Activated T-helper 1 cell treated with anti-CD3 and anti-CD28 coated beads, Interleukin-12 subunit alpha, Interleukin-12 subunit beta, Interleukin-2, Interleukin-4 antibody, amounts not matched to agents 30 ng/mL and 10 ng/mL and 1 ng/mL, durations not matched to agents 14 hours and 24 hours and 36 hours (primary cell): ENCODE measurements at regions of chr7 and their contacts with region 1.

Region 1: DNA sequence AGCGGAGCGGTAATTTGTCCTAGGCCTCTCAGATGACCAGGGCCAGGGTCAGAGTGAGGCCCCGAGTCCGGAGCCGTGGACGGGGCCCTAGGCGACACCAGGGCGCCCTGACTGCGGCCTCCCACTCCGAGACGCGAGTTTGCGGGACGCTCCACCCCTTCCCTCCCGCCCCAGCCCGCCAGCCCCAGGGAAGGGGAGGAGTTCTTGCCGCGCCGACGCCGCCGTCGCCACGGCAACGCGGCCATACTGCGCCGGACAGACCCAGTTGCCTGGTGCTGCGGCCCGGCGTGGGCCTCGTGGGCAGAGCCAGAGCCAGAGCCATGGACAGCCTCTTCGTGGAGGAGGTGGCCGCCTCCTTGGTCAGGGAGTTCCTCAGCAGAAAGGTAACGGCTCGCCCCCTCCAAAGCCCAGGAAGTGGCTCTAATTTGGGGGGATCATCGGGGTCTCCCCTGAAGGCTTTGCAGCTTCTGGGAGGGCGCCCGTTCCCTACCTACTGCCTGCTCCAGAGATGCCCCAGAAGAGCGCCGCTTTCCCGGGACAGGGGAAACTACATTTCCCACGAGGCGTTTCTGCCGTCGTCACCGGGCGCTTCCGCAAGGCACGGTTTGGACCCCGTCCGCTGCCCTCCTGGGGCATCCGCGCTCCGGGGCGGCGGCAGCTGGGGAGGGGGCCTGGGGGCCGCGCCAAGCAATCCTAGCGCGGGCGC is at the start of gene MINDY4:
- DNase-seq: peak; percentile 57
- H3K4me3 Mint-ChIP-seq: peak within 1 kb of the TSS; percentile 83
- H3K27ac Mint-ChIP-seq: peak within 1 kb of the TSS; percentile 77
- H3K4me1 Mint-ChIP-seq: peaks cover 12% of the 10 kb centered on the region
- H3K27me3 Mint-ChIP-seq: peaks cover 7% of the 10 kb centered on the region
- total RNA-seq, gene MINDY4: 0.96 and 2.2 TPM in 2 replicates

Region 2: DNA sequence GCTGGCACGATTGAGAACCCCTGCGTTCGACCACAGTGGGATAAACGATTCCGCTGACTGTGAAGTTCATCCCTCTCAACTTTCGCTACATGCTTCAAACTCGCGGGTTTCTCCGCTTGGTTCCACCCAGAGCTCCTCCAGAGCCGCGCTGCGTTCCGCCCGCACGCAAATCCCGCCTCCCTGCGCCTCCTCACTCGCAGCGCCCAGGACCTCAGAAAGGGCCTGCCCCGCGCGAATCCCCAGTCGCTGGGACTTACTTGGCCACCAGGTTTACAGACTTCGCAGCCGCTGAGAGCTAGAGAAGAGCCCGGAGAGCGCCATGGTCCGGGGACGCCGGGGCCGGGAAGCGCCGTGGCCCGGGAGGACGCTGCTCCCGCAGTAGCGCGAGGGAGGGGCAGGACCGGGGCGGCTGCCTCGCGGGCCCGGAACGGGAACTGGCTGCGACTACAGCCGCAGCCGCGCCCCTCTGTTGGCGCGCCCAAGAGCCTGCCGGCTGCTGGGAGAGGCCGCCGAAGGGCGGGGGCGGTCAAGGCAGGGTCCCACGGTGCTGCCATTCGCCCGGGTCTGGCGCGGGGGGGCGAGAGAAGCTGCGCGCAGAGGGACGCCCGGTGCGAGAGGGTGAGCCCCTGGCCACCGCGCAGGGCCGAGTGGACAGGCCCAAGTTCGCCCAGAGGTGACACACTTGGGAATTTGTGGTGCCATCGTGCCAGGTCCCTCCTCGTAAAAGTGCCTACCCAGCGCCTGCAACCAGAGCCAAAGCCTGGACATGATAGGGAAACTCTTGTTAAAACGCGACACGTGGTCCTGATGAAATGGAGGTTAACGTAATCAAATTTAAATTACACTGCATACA is 292.8 kb before region 1 on chr7 and contains the start of gene NOD1:
- intact Hi-C with region 1: loop called (anchors 2 kb)
- DNase-seq: peak; percentile 71
- H3K4me3 Mint-ChIP-seq: peak within 1 kb of the TSS; percentile 90
- H3K27ac Mint-ChIP-seq: peak within 1 kb of the TSS; percentile 91
- H3K4me1 Mint-ChIP-seq: peaks cover 61% of the 10 kb centered on the region
- H3K27me3 Mint-ChIP-seq: no peaks in the 10 kb centered on the region
- total RNA-seq, gene NOD1: 9.1 and 13.1 TPM in 2 replicates